Activated naive CD4-positive, alpha-beta T cell treated with anti-CD3 and anti-CD28 coated beads for 36 hours (primary cell): ENCODE measurements at regions of chr2 and their contacts with region 1.

Region 1: DNA sequence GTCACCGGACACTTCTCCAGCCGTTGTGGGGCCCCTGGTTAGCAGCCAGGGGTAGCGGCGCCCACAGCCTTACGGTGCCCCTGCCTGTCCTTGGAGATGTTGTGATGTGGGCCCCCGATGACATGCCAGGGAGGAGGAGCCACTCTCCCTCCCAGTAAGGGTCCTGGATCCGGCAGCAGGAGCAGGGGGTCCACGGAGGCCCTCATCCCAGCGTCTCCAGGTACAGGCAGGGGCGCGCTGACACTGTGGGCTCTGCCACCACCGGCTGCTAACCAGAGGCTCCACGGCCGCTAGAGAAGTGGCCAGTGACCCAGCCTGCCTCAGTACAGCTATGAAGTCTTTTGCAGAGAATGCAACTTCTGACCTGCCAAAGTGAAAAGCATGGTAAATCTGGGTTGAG is 121.2 kb downstream of the SPP2 start:
- DNase-seq: no peak
- H3K4me3 Mint-ChIP-seq: no peak overlapping the region
- H3K27ac Mint-ChIP-seq: no peak overlapping the region
- H3K4me1 Mint-ChIP-seq: no peaks in the 10 kb centered on the region
- H3K27me3 Mint-ChIP-seq: no peaks in the 10 kb centered on the region

Region 2: DNA sequence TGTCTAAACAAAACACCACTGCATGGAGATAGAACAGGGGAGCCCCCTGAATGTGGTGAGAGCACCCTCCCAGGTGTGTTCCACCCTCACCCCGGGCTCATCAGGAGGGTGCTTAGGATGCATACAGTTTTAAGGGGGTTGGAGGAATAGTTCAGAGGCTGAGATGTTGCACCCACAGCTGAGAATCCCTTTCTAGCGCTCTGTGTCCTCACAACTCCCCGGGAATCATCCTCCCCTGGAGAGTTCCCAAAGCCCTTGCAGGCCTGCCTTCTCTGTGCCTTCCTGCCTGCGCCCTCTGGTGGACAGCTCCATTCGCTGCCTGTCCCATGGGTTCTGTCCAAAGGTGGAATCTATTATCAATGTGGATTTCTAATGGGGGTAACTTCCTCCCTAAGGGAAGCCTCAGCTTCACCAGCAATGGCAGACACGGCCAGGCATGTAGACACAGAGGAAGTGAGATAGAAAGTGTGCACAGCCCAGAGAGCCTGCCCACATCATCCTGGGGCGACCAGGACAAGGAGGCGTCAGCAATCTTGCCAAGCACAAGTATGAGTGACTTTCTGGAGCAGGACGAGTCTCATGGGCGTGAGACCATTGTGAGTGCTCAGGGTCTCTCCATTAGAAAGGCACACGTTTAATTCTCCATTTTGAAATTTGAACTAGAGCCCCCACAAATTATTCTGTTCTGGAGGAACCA is 460.2 kb before region 1 on chr2:
- CTCF ChIA-PET with region 1: no interaction called
- intact Hi-C with region 1: no loop called
- DNase-seq: peak; percentile 82
- H3K4me3 Mint-ChIP-seq: no peak overlapping the region
- H3K27ac Mint-ChIP-seq: no peak overlapping the region
- H3K4me1 Mint-ChIP-seq: no peaks in the 10 kb centered on the region
- H3K27me3 Mint-ChIP-seq: peaks cover 11% of the 10 kb centered on the region

Region 3: DNA sequence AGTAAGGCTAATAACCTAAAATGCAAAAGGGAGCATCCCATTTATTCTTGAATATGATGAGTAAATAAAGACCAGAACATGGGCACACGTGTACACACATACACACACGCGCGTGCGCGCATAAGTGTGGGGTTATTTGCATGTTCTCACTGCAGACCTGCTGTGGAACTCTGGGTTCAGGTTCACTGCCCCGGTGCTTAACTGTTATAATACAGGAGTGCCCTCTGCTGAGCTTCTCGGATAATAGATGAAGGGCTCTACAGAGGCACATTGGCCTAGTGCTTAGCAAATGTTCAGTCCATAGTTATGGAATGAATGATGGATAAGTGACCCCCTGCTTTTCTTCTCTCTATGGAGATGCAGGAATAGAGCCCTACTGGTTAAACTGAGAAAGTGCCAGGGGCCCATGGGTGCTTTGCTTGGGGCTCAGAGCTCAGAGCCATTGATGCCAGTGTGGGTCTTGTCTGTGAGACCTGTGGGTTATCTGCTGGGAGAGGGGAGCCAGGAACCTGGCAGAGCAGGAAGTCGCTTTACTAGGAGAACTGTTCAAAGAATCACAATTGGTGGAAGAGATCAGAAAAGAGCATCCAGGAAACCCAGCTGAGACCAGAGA is 328.8 kb after region 1 on chr2:
- CTCF ChIA-PET with region 1: interaction called, 3 read pairs
- intact Hi-C with region 1: loop called (anchors 1 kb)
- DNase-seq: peak; percentile 83
- H3K4me3 Mint-ChIP-seq: no peak overlapping the region
- H3K27ac Mint-ChIP-seq: no peak overlapping the region
- H3K4me1 Mint-ChIP-seq: peaks cover 26% of the 10 kb centered on the region
- H3K27me3 Mint-ChIP-seq: no peaks in the 10 kb centered on the region